Right cardiac atrium (tissue), 5 donors: ENCODE measurements at regions of chr1 and their contacts with region 1.

Region 1: DNA sequence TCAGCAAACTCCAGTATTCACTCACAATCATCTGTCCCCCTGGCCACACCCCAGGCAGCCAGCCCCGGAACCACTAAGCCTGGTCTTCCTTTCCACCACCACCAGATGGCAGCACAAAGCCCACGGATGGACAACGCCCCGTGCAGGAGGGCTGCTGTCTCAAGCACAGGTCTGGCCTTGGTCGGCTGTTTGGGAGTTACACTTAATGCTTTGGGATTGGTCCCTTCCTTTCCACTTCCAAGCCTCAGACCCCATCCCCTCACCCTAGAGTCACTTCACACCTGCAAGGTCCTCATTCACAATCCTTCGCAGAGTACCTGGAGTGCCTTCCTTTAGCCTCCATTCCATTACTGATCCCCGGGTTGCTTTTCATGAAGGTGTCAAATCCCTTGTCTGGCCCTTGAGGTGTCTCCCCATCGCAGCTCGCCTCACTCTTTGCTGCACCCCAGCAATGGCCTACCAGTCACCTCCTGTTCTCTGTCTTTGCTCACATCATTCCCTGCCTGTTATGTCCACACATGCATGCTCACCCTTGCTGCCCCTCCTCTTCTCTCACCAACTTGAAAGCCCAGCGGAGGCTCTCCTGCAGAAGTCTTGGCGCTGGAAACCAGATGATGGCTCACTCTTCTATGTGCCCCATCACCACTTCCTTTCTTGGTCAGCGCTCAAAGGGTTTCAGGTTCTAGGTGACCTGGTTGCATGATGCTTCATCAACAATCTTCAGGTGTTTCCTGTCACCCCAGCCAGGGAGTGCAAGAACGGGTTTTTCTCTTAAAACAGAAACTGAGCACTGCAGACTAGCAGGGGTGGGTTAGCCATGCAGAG is 24.9 kb upstream of the KCNA2 start:
- DNase-seq: peak; percentile 78 to 88 (median 86)
- ATAC-seq: peak; percentile 70 to 76
- H3K4me3 ChIP-seq: no peak overlapping the region
- H3K27ac ChIP-seq: no peak overlapping the region
- H3K4me1 ChIP-seq: peaks cover 4% of the 10 kb centered on the region
- H3K27me3 ChIP-seq: no peaks in the 10 kb centered on the region

Region 2: DNA sequence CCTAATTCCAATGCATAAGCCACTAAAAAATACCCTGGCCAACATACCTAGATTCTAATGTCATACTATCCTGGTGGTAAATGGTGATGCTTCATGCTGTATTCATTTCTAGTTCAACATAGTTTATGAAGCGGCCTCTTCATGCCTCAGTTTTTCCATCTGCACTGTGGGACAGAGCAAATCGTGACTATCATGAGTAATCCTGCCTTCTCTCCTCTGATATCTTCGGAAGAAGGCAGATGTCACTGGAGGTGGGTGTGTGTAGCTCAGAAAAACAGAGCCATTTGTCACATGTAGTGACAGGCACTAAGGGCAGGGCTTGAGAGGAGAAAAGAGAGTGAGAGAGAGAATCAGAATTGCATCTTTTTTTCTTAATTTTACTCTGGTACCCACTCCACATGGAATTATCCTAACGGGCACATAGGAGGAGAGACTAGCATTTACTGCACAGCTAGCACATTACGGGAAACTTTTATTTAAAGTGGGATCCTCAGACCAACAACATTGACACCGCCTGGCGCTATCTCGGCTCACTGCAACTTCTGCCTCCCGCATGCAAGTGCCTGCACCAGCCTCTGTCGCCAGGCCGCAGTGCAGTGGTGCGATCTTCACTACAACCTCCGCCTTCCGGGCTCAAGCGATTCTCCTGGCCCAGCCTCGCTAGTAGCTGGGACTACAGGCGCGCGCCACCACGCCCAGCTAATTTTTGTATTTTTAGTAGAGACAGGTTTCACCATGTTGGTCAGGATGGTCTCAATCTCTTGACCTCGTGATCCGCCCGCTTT is 122.1 kb after region 1 on chr1:
- intact Hi-C with region 1: no loop called
- DNase-seq: no peak
- ATAC-seq: no peak
- H3K4me3 ChIP-seq: no peak overlapping the region
- H3K27ac ChIP-seq: no peak overlapping the region
- H3K4me1 ChIP-seq: no peaks in the 10 kb centered on the region
- H3K27me3 ChIP-seq: no peaks in the 10 kb centered on the region

Region 3: GRCh38 chr1:110766025-110766647 is 135.1 kb after region 1 on chr1:
- intact Hi-C with region 1: loop called (anchors 2 to 5 kb)
- DNase-seq: no peak
- ATAC-seq: peak in 1 of 2 donors; percentile 32
- H3K4me3 ChIP-seq: no peak overlapping the region
- H3K27ac ChIP-seq: no peak overlapping the region
- H3K4me1 ChIP-seq: no peaks in the 10 kb centered on the region
- H3K27me3 ChIP-seq: no peaks in the 10 kb centered on the region

Region 4: GRCh38 chr1:110798691-110799256 is 167.7 kb after region 1 on chr1:
- intact Hi-C with region 1: no loop called
- DNase-seq: no peak
- ATAC-seq: no peak
- H3K4me3 ChIP-seq: no peak overlapping the region
- H3K27ac ChIP-seq: no peak overlapping the region
- H3K4me1 ChIP-seq: no peaks in the 10 kb centered on the region
- H3K27me3 ChIP-seq: no peaks in the 10 kb centered on the region